Activated T-helper 1 cell treated with anti-CD3 and anti-CD28 coated beads, Interleukin-12 subunit alpha, Interleukin-12 subunit beta, Interleukin-2, Interleukin-4 antibody, amounts not matched to agents 30 ng/mL and 10 ng/mL and 1 ng/mL, durations not matched to agents 14 hours and 24 hours and 36 hours (primary cell): ENCODE measurements at regions of chr15 and their contacts with region 1.

Region 1: DNA sequence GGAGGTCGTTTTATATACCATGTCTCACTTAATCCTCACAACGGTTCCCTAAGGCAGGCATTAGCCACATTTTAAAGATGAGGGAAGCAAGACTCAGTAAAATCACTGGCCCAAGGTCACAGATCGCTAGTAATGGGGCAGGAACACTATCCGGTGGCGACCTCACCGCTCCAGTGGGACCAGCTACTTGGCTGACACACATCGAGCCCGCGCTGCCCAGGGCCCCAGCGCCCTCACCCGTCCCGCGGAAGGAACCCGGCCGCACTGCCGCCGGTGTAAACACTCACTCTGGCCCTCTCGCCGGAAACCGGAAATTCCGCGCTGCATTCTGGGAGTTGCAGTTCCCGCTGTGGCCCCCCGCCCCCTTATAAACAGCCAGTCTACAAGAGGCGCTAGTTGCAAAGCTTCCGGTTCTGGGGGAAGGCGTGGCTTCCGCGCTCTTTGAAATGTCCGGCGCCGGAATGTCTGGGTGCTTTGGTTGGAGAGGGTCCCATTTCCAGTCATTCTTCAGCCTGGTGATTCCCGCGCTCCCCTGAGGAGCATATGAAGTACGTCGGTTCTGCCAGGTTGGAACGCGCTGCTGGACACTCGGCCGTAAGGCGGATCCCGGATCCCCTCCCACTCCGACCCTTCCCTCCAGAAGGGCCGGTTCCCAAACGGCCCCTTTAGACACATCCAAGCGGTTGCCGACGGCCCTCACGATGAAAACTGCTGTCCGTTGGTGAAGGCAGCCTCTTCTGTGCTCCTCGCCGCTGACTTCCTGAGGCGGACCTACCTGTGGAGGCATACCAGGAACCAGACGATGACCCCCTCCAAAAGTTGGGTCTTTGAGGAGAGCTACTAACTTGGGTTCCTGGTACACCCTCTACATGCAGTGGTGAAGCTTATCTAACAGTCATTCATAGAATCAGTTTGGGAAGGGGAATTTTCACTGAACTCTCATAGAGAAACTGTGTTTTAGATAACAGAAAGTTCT is at the start of gene UBL7:
- DNase-seq: peak; percentile 96
- H3K4me3 Mint-ChIP-seq: peak within 1 kb of the TSS; percentile 97
- H3K27ac Mint-ChIP-seq: peak within 1 kb of the TSS; percentile 94
- H3K4me1 Mint-ChIP-seq: peaks cover 56% of the 10 kb centered on the region
- H3K27me3 Mint-ChIP-seq: no peaks in the 10 kb centered on the region
- total RNA-seq, gene UBL7: 55.4 and 56.0 TPM in 2 replicates

Region 2: DNA sequence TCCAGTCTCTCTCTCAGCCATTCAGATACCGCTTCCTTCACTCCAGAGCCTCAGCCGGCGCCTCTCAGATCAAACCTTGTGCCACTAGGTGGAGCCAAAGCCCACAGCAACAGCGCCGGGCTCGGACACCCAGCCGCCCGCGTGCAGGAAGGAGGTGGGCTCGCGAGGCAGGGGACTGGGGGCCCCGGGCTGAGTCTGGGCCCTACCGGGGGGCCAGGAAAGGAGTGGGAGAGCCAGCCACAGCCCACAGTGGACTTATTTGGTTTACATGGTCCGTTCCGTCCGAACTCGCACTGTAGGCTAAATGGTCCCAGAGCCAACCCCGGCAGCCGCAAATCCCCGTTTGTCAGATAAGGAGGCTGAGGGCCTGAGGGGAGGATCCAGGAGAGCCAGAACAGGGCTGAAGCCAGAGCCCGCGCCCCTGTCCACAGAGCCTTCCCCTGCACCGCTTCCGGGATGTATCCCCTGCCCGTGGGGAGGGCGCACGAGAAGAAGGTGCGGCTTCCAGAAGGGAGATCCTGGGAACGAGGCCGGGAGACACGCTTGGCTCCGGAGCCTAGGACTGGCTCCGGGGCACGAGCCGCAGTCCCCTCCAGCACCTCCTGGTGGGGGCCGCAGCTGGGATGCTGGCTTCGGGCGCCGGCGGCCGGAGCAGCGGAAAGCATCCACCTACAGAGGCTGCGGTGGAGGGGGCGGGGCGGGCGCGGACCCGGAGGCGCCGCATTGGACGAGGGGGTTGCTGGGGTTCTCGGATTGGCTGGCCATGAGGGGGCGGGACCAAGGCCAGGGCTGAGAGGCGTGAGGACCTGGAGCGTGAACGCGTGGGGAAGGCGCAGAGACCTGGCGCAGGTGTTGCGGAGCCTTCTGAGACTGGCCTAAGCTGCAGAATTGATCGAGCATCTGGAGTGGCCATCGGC is 87.2 kb before region 1 on chr15:
- intact Hi-C with region 1: loop called (anchors 1 kb)
- DNase-seq: peak; percentile 90
- H3K4me3 Mint-ChIP-seq: peak overlapping the region; percentile 85
- H3K27ac Mint-ChIP-seq: peak overlapping the region; percentile 78
- H3K4me1 Mint-ChIP-seq: peaks cover 50% of the 10 kb centered on the region
- H3K27me3 Mint-ChIP-seq: peaks cover 26% of the 10 kb centered on the region

Region 3: GRCh38 chr15:74402873-74403587 is 58.1 kb before region 1 on chr15:
- intact Hi-C with region 1: loop called (anchors 1 kb)
- DNase-seq: peak; percentile 70
- H3K4me3 Mint-ChIP-seq: peak overlapping the region; percentile 75
- H3K27ac Mint-ChIP-seq: peak overlapping the region; percentile 85
- H3K4me1 Mint-ChIP-seq: peaks cover 89% of the 10 kb centered on the region
- H3K27me3 Mint-ChIP-seq: no peaks in the 10 kb centered on the region

Region 4: DNA sequence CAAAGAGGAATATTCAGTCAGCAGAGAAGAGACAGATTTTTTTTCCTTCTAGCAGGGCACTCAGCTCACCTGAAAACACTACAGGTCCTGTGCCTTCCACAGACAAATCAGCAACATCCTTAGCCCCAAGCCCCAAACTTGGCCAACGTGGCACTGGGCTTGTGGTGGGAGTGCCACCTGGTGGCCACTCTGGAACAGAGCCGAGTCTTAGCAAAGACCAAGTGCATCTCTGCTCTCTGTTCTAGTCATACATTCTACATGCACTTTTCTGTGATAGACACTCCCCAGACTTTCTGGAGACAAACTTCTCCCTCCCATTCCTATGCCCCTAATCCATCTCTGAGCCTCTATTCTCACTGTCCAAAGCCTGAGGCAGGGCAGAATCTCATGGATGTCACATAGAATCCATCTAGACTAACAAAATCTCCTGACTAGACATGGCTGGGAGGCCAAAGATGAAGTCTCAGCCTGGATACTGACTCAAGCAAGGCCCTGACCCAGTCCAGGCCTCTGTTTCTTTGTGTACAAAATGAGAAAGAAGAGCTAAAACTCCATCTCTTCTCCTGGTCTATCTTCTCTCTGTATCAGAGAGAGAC is 22.3 kb before region 1 on chr15:
- intact Hi-C with region 1: loop called (anchors 1 kb)
- DNase-seq: peak; percentile 73
- H3K4me3 Mint-ChIP-seq: no peak overlapping the region
- H3K27ac Mint-ChIP-seq: peak overlapping the region; percentile 1
- H3K4me1 Mint-ChIP-seq: peaks cover 58% of the 10 kb centered on the region
- H3K27me3 Mint-ChIP-seq: no peaks in the 10 kb centered on the region

Region 5: GRCh38 chr15:74511583-74511982 is 50.4 kb after region 1 on chr15:
- intact Hi-C with region 1: loop called (anchors 10 kb)
- DNase-seq: no peak
- H3K4me3 Mint-ChIP-seq: no peak overlapping the region
- H3K27ac Mint-ChIP-seq: no peak overlapping the region
- H3K4me1 Mint-ChIP-seq: peaks cover 15% of the 10 kb centered on the region
- H3K27me3 Mint-ChIP-seq: no peaks in the 10 kb centered on the region

Region 6: DNA sequence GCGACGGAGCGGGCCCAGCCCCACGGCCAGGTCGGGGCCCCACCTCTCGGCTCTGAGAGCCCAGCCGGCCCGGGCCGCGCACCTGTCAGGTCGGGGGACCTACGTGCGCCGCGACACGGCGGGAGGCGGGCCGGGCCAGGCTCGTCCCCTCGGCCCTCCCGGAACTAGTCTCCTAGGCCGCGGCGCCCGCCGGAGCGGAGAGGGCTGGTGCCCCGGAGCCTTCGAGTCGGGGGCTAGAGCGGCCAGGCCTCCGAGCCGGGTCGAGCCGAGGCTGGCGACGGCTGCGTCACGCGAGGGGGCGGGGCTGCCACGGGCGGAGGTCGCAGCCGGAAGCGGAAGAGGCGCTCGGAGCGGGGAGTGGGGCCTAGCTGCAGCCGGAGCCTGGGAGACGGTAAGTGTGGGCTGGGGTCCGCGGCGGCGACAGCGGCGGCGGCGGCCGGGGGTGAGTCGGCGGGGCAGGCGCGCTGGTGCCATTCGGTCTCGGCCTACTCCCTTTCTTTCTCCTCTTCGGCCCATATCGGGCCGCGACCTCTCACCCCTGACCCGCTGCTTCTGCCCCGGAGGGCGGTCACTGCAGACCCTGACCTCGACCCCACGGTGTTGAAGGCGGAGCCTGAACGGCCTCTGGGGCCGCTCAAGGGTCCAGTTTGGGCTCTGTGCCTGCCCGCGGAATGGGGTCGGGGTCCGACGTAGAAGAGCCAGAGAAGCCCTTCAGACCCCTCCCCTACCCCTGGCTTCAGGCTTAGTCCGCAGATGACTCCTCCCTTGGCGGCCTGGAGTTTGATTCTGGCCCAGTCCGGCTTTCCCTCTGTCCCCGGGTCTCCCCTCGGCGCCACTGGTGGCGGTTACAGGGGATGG is 154.6 kb after region 1 on chr15 and contains the start of gene CLK3:
- intact Hi-C with region 1: loop called (anchors 1 kb)
- DNase-seq: peak; percentile 94
- H3K4me3 Mint-ChIP-seq: peak within 1 kb of the TSS; percentile 93
- H3K27ac Mint-ChIP-seq: peak within 1 kb of the TSS; percentile 95
- H3K4me1 Mint-ChIP-seq: peaks cover 33% of the 10 kb centered on the region
- H3K27me3 Mint-ChIP-seq: peaks cover 5% of the 10 kb centered on the region
- total RNA-seq, gene CLK3: 103 and 107 TPM in 2 replicates